Ascending aorta (tissue), 2 donors: ENCODE measurements at regions of chr20 and their contacts with region 1.

Region 1: GRCh38 chr20:5061213-5061612 is 58.5 kb downstream of the PCNA start:
- DNase-seq: no peak
- H3K4me3 ChIP-seq: no peak overlapping the region
- H3K27ac ChIP-seq: no peak overlapping the region
- H3K4me1 ChIP-seq: peaks cover 3 to 6% of the 10 kb centered on the region in 2 donors
- H3K27me3 ChIP-seq: no peaks in the 10 kb centered on the region
- CTCF ChIP-seq: no peak

Region 2: DNA sequence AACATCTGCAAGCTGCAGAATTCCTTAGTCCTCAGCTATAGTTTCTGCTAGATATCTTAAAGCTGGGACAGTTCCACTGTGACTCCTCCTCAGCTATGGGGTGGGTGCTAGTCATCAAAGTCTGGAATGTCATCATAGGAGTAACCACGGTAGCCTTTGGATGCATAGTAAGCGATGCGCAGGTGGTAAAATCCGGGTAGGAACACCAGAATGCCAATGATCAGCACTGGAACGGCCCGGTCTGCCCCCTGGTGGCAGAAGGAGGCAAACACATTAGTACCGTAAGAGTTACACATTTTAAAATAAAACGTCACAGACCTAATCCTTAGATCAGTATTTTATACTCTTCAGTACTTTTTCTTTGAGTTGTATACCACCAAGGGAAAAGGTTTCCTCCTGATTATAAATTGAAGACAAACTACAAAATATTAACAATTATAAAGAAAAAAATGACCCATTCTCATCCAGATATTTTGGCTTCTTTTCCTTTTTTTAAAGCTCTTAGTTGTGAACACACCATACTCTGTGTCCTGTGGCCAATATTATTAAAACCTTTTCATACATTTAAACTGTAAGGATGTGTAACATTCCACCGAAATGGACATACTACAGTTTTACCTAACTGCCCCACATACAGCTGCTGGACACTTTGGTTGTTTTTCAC is 39.6 kb after region 1 on chr20:
- intact Hi-C with region 1: loop called (anchors 5 kb)
- DNase-seq: peak in 1 of 2 donors; percentile 88
- H3K4me3 ChIP-seq: no peak overlapping the region
- H3K27ac ChIP-seq: peak overlapping the region in 1 of 2 donors; percentile 49
- H3K4me1 ChIP-seq: peaks cover 0 to 3% of the 10 kb centered on the region in 2 donors
- H3K27me3 ChIP-seq: no peaks in the 10 kb centered on the region
- CTCF ChIP-seq: peak; percentile 79 to 88 (median 86)